T-cell (primary cell): ENCODE measurements at regions of chr7 and their contacts with region 1.

Region 1: DNA sequence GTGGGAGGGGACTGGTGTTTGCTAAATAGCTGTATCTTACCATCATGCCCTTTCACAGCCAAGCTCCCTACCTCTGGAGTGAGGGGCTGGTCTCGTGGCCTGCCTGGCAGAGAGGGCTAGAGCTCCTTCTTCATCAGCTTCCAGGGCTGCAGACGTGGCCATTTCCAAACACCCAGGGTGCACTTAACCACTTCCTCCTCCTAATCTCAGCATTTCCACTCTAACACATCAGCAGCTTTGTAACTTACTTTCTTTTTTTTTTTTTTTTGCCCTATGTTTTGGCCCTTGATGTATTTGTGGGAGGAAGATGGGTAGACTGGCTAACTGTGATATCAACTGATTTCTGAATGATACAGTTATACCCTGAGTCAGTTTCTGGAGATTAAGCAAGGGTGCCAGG is 27.4 kb downstream of the LRRC4 start:
- DNase-seq: peak in 1 of 35 experiments; percentile 11
- ATAC-seq: no peak
- H3K4me3 ChIP-seq: no peak overlapping the region
- H3K4me3 Mint-ChIP-seq: no peak overlapping the region
- H3K27ac ChIP-seq: no peak overlapping the region
- H3K27ac Mint-ChIP-seq: no peak overlapping the region
- H3K4me1 ChIP-seq: peaks cover 2 to 6% of the 10 kb centered on the region in 2 experiments
- H3K4me1 Mint-ChIP-seq: peaks cover 24 to 28% (median 26%) of the 10 kb centered on the region in 3 donors
- H3K27me3 ChIP-seq: no peaks in the 10 kb centered on the region
- H3K27me3 Mint-ChIP-seq: no peaks in the 10 kb centered on the region

Region 2: GRCh38 chr7:127920787-127921438 is 82.9 kb before region 1 on chr7:
- CTCF ChIA-PET with region 1: no interaction called
- POLR2A ChIA-PET with region 1: interaction called in 1 of 2 experiments, 12 read pairs
- DNase-seq: no peak
- ATAC-seq: no peak
- H3K4me3 ChIP-seq: no peak overlapping the region
- H3K4me3 Mint-ChIP-seq: no peak overlapping the region
- H3K27ac ChIP-seq: no peak overlapping the region
- H3K27ac Mint-ChIP-seq: no peak overlapping the region
- H3K4me1 ChIP-seq: no peaks in the 10 kb centered on the region
- H3K4me1 Mint-ChIP-seq: peaks cover 5 to 14% (median 14%) of the 10 kb centered on the region in 3 donors
- H3K27me3 ChIP-seq: no peaks in the 10 kb centered on the region
- H3K27me3 Mint-ChIP-seq: no peaks in the 10 kb centered on the region

Region 3: GRCh38 chr7:128053023-128053422 is 49.2 kb after region 1 on chr7:
- CTCF ChIA-PET with region 1: no interaction called
- POLR2A ChIA-PET with region 1: no interaction called
- DNase-seq: peak in 2 of 35 experiments; percentile 13 to 43
- ATAC-seq: no peak
- H3K4me3 ChIP-seq: no peak overlapping the region
- H3K4me3 Mint-ChIP-seq: no peak overlapping the region
- H3K27ac ChIP-seq: no peak overlapping the region
- H3K27ac Mint-ChIP-seq: peak overlapping the region in 1 of 2 donors; percentile 5
- H3K4me1 ChIP-seq: peaks cover 11 to 20% of the 10 kb centered on the region in 2 experiments
- H3K4me1 Mint-ChIP-seq: peaks cover 55 to 71% (median 58%) of the 10 kb centered on the region in 3 donors
- H3K27me3 ChIP-seq: no peaks in the 10 kb centered on the region
- H3K27me3 Mint-ChIP-seq: no peaks in the 10 kb centered on the region